PC-9 (cell line): ENCODE measurements at regions of chr9 and their contacts with region 1.

Region 1: DNA sequence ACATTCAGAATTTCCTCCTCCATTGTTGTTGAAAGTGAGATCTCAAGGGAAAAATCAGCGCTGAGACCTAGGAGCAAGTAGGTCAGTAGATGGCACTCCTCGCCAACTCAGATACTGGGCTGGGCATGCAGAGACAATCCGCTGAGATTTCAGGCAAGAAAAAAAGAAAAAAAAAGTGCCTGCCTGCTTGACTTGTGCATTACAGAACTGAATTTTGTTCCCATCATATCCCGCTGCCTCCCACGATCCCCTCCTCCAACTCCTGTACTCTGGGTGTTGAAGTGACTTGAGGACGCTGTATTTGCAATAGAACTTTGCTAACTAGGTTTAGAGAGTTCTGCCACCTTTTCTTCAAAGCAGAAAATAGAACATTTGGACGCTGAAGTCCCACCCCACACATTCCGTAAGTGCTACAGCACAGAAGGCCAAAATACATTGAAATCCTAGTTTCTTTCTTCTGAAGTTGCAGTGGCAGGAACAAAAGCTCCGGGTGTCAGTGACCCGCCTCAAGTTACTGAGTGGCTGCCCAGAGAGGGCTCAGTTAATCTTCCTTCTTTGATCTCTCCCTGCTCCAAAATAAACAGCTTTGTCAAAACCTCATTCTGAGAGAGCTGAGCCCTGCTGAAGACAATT is 265.8 kb downstream of the MLLT3 start:
- DNase-seq: peak; percentile 56 to 66
- H3K4me3 ChIP-seq: peak overlapping the region; percentile 30; the same call in 1 of the 2 replicates
- H3K27ac ChIP-seq: peak overlapping the region; percentile 51
- H3K4me1 ChIP-seq: peaks cover 24% of the 10 kb centered on the region
- H3K27me3 ChIP-seq: no peaks in the 10 kb centered on the region
- CTCF ChIP-seq: peak; percentile 74

Region 2: GRCh38 chr9:19358701-19359100 is 997.8 kb before region 1 on chr9:
- CTCF ChIA-PET with region 1: no interaction called
- POLR2A ChIA-PET with region 1: interaction called, 10 read pairs
- intact Hi-C with region 1: no loop called
- DNase-seq: no peak
- H3K4me3 ChIP-seq: no peak overlapping the region
- H3K27ac ChIP-seq: no peak overlapping the region
- H3K4me1 ChIP-seq: no peaks in the 10 kb centered on the region
- H3K27me3 ChIP-seq: no peaks in the 10 kb centered on the region
- CTCF ChIP-seq: no peak

Region 3: DNA sequence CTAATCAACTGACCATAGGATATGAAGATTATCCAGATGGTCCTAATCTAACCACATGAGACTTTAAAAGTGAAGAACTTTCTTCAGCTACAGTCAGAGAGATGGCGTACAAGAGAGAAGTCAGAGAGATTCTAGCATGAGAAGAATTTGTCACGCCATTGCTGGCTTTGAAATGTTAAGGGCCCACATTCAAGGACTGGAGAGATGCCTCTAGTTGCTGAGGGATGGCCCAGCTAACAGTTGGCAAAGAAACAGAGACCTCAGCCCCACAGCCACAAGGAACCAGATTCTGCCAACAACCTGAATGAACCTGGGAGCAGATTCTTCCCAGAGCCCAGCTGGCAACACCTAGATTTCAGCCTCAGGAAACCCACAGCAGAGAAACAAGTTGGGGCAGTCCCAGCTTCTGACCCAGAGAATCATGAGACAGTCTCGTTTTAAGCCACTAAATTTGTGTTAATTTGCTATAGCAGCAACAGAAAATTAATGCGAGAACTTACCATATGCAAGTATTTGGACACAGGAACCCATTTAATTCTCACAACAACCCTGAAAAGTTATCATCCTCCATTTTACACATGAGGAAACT is 133.8 kb after region 1 on chr9:
- CTCF ChIA-PET with region 1: no interaction called
- POLR2A ChIA-PET with region 1: no interaction called
- intact Hi-C with region 1: no loop called
- DNase-seq: no peak
- H3K4me3 ChIP-seq: no peak overlapping the region
- H3K27ac ChIP-seq: no peak overlapping the region
- H3K4me1 ChIP-seq: no peaks in the 10 kb centered on the region
- H3K27me3 ChIP-seq: no peaks in the 10 kb centered on the region
- CTCF ChIP-seq: no peak

Region 4: GRCh38 chr9:20512106-20512505 is 155.6 kb after region 1 on chr9:
- CTCF ChIA-PET with region 1: no interaction called
- POLR2A ChIA-PET with region 1: no interaction called
- intact Hi-C with region 1: loop called (anchors 5 kb)
- DNase-seq: peak; percentile 49 to 80
- H3K4me3 ChIP-seq: no peak overlapping the region
- H3K27ac ChIP-seq: peak overlapping the region; percentile 77
- H3K4me1 ChIP-seq: peaks cover 20% of the 10 kb centered on the region
- H3K27me3 ChIP-seq: no peaks in the 10 kb centered on the region
- CTCF ChIP-seq: no peak

Region 5: GRCh38 chr9:20552874-20553575 is 196.5 kb after region 1 on chr9:
- CTCF ChIA-PET with region 1: no interaction called
- POLR2A ChIA-PET with region 1: no interaction called
- intact Hi-C with region 1: loop called (anchors 5 kb)
- DNase-seq: no peak
- H3K4me3 ChIP-seq: no peak overlapping the region
- H3K27ac ChIP-seq: peak overlapping the region; percentile 99
- H3K4me1 ChIP-seq: peaks cover 50% of the 10 kb centered on the region
- H3K27me3 ChIP-seq: no peaks in the 10 kb centered on the region
- CTCF ChIP-seq: 0 out of 2 replicates have a peak, but pooled peaks have one; percentile 30

Region 6: DNA sequence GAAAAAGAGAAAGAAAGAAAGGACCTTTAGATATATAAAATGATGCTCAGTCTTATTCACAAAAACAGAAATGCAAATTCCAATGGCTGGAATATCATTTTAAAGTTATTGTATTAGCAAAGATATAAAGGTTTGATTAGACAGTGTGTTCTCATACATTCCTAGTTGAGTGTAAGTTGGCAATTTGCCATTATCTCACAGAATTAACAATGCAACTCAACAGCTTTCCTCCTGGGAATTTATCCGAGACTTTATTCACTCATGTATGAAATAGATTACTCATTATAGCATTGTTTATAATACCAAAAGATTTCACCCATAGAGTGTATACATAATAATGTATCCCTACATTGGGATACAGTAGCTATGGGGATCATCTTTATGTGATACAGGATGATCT is 292.9 kb after region 1 on chr9:
- CTCF ChIA-PET with region 1: no interaction called
- POLR2A ChIA-PET with region 1: no interaction called
- intact Hi-C with region 1: no loop called
- DNase-seq: no peak
- H3K4me3 ChIP-seq: no peak overlapping the region
- H3K27ac ChIP-seq: no peak overlapping the region
- H3K4me1 ChIP-seq: no peaks in the 10 kb centered on the region
- H3K27me3 ChIP-seq: no peaks in the 10 kb centered on the region
- CTCF ChIP-seq: no peak

Region 7: GRCh38 chr9:20684035-20684872 is 327.7 kb after region 1 on chr9 and contains the start of gene FOCAD:
- CTCF ChIA-PET with region 1: no interaction called
- POLR2A ChIA-PET with region 1: no interaction called
- intact Hi-C with region 1: loop called (anchors 1 kb)
- DNase-seq: peak; percentile 78 to 92
- H3K4me3 ChIP-seq: peak within 1 kb of the TSS; percentile 92
- H3K27ac ChIP-seq: peak within 1 kb of the TSS; percentile 72
- H3K4me1 ChIP-seq: peaks cover 14% of the 10 kb centered on the region
- H3K27me3 ChIP-seq: no peaks in the 10 kb centered on the region
- CTCF ChIP-seq: no peak
- total RNA-seq, gene FOCAD: 12.4 and 17.1 TPM in 2 replicates

Region 8: DNA sequence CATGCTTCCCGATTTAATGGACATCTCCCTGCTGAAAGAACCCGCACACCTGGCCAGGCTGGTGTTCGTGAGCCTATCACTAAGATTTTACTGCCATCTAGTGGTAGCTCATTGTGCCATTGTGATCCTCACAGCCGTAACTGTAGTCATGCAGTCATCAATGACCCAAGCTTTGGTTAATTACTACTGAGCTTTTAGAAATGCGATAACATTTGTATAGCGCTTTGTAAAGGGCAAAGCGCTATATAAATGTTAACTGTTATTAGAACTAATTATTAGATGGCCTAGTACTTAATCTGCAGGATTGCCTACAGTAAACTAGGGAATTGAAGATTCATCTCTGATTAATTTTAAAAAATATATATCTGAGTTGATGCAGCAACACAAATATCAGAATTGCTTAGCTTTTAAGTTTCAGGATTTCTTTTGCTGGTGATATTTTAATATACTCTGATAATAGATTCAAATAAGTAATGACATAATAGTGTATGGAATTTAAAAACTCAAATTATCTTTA is 584.7 kb after region 1 on chr9:
- CTCF ChIA-PET with region 1: interaction called, 3 read pairs
- POLR2A ChIA-PET with region 1: no interaction called
- intact Hi-C with region 1: loop called (anchors 1 kb)
- DNase-seq: peak; percentile 34
- H3K4me3 ChIP-seq: no peak overlapping the region
- H3K27ac ChIP-seq: no peak overlapping the region
- H3K4me1 ChIP-seq: no peaks in the 10 kb centered on the region
- H3K27me3 ChIP-seq: no peaks in the 10 kb centered on the region
- CTCF ChIP-seq: peak; percentile 82

Region 9: GRCh38 chr9:21110708-21111576 is 754.4 kb after region 1 on chr9:
- CTCF ChIA-PET with region 1: no interaction called
- POLR2A ChIA-PET with region 1: no interaction called
- intact Hi-C with region 1: loop called (anchors 1 kb)
- DNase-seq: peak; percentile 4 to 45
- H3K4me3 ChIP-seq: no peak overlapping the region
- H3K27ac ChIP-seq: no peak overlapping the region
- H3K4me1 ChIP-seq: no peaks in the 10 kb centered on the region
- H3K27me3 ChIP-seq: no peaks in the 10 kb centered on the region
- CTCF ChIP-seq: peak; percentile 82